CD4-positive, alpha-beta T cell (primary cell): ENCODE measurements at regions of chrX and their contacts with region 1.

Region 1: GRCh38 chrX:103464774-103465117 is 54.5 kb downstream of the RAB40A start:
- DNase-seq: peak; percentile 53 to 86 (median 74)
- ATAC-seq: peak; percentile 95
- H3K4me3 ChIP-seq: peak overlapping the region; percentile 60
- H3K4me3 Mint-ChIP-seq: peak overlapping the region; percentile 90
- H3K27ac ChIP-seq: peak overlapping the region in 1 of 2 donors; percentile 9
- H3K27ac Mint-ChIP-seq: peak overlapping the region; percentile 32
- H3K4me1 ChIP-seq: peaks cover 13% of the 10 kb centered on the region
- H3K4me1 Mint-ChIP-seq: peaks cover 11% of the 10 kb centered on the region
- H3K27me3 ChIP-seq: no peaks in the 10 kb centered on the region
- H3K27me3 Mint-ChIP-seq: no peaks in the 10 kb centered on the region
- CTCF ChIP-seq: peak; percentile 52

Region 2: DNA sequence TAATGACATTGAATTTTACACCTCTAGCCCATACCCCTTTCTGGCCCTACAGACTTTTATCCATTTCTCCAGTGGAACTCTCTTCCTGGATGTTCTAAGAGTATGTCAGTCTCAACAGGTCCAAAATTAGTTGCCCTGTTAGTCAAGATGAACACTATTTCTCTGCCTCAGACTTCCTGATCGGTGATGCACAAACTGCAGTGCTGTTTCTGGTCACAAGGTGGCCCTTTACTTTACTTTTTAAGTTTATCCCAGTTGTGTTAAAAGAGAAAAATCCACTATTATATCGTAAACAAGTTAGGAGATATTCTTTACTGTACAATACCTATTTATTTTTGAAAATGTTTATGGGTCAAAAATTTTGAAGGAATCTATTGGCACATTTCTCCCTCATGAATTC is 121.6 kb before region 1 on chrX:
- CTCF ChIA-PET with region 1: interaction called, 3 read pairs
- POLR2A ChIA-PET with region 1: no interaction called
- intact Hi-C with region 1: loop called (anchors 1 kb)
- DNase-seq: peak in 13 of 14 experiments; percentile 5 to 68 (median 29)
- ATAC-seq: peak; percentile 48
- H3K4me3 ChIP-seq: no peak overlapping the region
- H3K4me3 Mint-ChIP-seq: no peak overlapping the region
- H3K27ac ChIP-seq: no peak overlapping the region
- H3K27ac Mint-ChIP-seq: no peak overlapping the region
- H3K4me1 ChIP-seq: no peaks in the 10 kb centered on the region
- H3K4me1 Mint-ChIP-seq: no peaks in the 10 kb centered on the region
- H3K27me3 ChIP-seq: no peaks in the 10 kb centered on the region
- H3K27me3 Mint-ChIP-seq: peaks cover 4% of the 10 kb centered on the region
- CTCF ChIP-seq: peak; percentile 58

Region 3: GRCh38 chrX:103533511-103534216 is 68.9 kb after region 1 on chrX:
- CTCF ChIA-PET with region 1: no interaction called
- POLR2A ChIA-PET with region 1: no interaction called
- intact Hi-C with region 1: no loop called
- DNase-seq: peak; percentile 38 to 81 (median 61)
- ATAC-seq: peak; percentile 60
- H3K4me3 ChIP-seq: peak overlapping the region; percentile 20
- H3K4me3 Mint-ChIP-seq: peak overlapping the region; percentile 58
- H3K27ac ChIP-seq: no peak overlapping the region
- H3K27ac Mint-ChIP-seq: no peak overlapping the region
- H3K4me1 ChIP-seq: peaks cover 4% of the 10 kb centered on the region
- H3K4me1 Mint-ChIP-seq: peaks cover 4% of the 10 kb centered on the region
- H3K27me3 ChIP-seq: no peaks in the 10 kb centered on the region
- H3K27me3 Mint-ChIP-seq: no peaks in the 10 kb centered on the region
- CTCF ChIP-seq: peak; percentile 75